IMR-90 (cell line): ENCODE measurements at regions of chr10 and their contacts with region 1.

Region 1: GRCh38 chr10:104406715-104407650 is 53.4 kb downstream of the CFAP58 start:
- DNase-seq: peak; percentile 50
- ATAC-seq: peak; percentile 66
- H3K4me3 ChIP-seq: no peak overlapping the region
- H3K27ac ChIP-seq: no peak overlapping the region
- H3K4me1 ChIP-seq: no peaks in the 10 kb centered on the region
- H3K27me3 ChIP-seq: peaks cover 2% of the 10 kb centered on the region; the same call in 1 of the 2 replicates
- CTCF ChIP-seq: peak; percentile 55
- POLR2A ChIP-seq: no peak
- RAD21 ChIP-seq: peak; percentile 66

Region 2: GRCh38 chr10:104328896-104329710 is 77.9 kb before region 1 on chr10:
- CTCF ChIA-PET with region 1: no interaction called
- POLR2A ChIA-PET with region 1: no interaction called
- dilution Hi-C with region 1: no loop called
- in situ Hi-C with region 1: no loop called
- intact Hi-C with region 1: no loop called
- DNase-seq: peak; percentile 97
- ATAC-seq: peak; percentile 50
- H3K4me3 ChIP-seq: no peak overlapping the region
- H3K27ac ChIP-seq: peak overlapping the region; percentile 76
- H3K4me1 ChIP-seq: peaks cover 63% of the 10 kb centered on the region
- H3K27me3 ChIP-seq: no peaks in the 10 kb centered on the region
- CTCF ChIP-seq: no peak
- POLR2A ChIP-seq: peak; percentile 73; the same call in 1 of the 2 replicates
- RAD21 ChIP-seq: 0 out of 2 replicates have a peak, but pooled peaks have one; percentile 2

Region 3: GRCh38 chr10:104424719-104425118 is 17.7 kb after region 1 on chr10:
- CTCF ChIA-PET with region 1: no interaction called
- POLR2A ChIA-PET with region 1: no interaction called
- dilution Hi-C with region 1: no loop called
- in situ Hi-C with region 1: no loop called
- intact Hi-C with region 1: no loop called
- DNase-seq: peak; percentile 1
- ATAC-seq: no peak
- H3K4me3 ChIP-seq: no peak overlapping the region
- H3K27ac ChIP-seq: no peak overlapping the region
- H3K4me1 ChIP-seq: no peaks in the 10 kb centered on the region
- H3K27me3 ChIP-seq: peaks cover 4% of the 10 kb centered on the region
- CTCF ChIP-seq: no peak
- POLR2A ChIP-seq: no peak
- RAD21 ChIP-seq: no peak

Region 4: DNA sequence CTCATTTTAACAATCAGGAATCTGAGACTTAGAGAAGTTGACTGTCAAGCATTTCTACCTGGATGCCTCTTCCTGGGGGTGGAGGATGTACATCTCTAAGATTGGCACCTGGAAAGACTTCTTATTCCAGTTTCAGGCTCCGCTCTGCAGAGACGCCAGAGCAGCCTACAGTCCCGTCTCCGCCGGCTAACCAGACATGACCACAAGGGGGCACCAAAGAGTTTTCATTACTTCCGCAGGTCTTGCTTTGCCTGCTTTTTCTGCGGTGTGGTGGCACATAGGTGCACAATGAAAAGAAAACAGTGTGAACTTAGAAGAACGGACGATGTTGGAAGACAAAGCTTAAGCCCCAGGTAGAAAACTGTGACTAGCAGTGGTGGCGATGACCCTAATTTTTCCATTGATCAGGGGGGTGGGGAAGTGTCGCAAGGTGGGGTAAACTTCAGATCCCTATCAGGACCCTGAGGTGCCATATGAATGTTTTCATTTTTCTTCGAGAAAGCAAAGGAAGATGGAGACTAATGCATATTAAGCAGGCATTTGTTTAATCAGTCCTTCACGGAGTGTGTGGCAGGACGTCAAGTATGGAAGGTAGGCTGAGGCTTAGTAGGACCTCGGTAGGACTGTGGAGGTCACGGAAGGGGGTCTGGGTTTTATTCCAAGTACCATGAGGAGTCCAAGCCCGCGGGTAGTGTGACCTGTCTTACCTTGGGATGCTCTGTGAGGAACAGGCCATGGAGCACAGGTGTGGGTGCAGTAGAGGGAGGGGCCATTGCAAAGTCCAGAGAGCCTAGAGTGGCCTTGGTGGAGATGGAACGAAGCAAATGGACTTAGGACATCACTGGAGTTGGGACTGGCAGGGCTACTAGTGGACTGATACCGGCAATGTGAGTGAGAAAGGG is 174.0 kb after region 1 on chr10:
- CTCF ChIA-PET with region 1: no interaction called
- POLR2A ChIA-PET with region 1: no interaction called
- dilution Hi-C with region 1: no loop called
- in situ Hi-C with region 1: no loop called
- intact Hi-C with region 1: loop called (anchors 10 kb)
- DNase-seq: peak; percentile 51
- ATAC-seq: peak; percentile 90
- H3K4me3 ChIP-seq: no peak overlapping the region
- H3K27ac ChIP-seq: no peak overlapping the region
- H3K4me1 ChIP-seq: no peaks in the 10 kb centered on the region; the same call in 1 of the 2 replicates
- H3K27me3 ChIP-seq: no peaks in the 10 kb centered on the region; the same call in none of the 2 replicates
- CTCF ChIP-seq: peak; percentile 70
- POLR2A ChIP-seq: no peak
- RAD21 ChIP-seq: peak; percentile 62

Region 5: DNA sequence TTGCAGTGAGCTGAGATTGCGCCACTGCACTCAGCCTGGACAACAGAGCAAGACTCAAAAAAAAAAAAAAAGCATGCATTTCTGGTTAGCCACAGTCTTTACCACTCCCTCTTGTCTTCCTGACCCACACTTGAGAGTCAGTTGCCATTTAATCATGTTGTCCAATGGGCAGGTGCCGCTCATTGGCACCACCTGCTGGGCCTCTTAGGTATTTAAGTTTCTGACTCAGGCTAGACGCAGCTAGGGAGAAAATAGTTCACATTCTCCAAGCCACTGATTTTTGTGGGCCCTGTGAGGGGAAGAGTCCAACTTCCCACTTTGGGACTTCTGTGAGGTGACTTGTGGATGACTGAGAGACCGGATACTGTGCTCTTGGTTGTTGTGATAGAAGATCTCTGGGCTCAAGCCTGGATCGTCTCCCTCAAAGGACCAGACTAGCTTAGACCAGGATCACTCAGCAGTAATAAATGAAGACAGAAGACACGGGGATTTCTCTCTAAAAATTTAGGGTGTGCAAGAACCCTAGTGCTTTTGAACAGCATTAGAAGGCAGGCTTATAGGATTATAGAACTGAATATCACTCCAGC is 207.4 kb after region 1 on chr10:
- CTCF ChIA-PET with region 1: no interaction called
- POLR2A ChIA-PET with region 1: no interaction called
- dilution Hi-C with region 1: no loop called
- in situ Hi-C with region 1: no loop called
- intact Hi-C with region 1: loop called (anchors 1 kb)
- DNase-seq: peak; percentile 3
- ATAC-seq: no peak
- H3K4me3 ChIP-seq: no peak overlapping the region
- H3K27ac ChIP-seq: no peak overlapping the region
- H3K4me1 ChIP-seq: no peaks in the 10 kb centered on the region
- H3K27me3 ChIP-seq: no peaks in the 10 kb centered on the region
- CTCF ChIP-seq: peak; percentile 46
- POLR2A ChIP-seq: no peak
- RAD21 ChIP-seq: peak; percentile 35